GM10248 (cell line): ENCODE measurements at regions of chr16 and their contacts with region 1.

Region 1: DNA sequence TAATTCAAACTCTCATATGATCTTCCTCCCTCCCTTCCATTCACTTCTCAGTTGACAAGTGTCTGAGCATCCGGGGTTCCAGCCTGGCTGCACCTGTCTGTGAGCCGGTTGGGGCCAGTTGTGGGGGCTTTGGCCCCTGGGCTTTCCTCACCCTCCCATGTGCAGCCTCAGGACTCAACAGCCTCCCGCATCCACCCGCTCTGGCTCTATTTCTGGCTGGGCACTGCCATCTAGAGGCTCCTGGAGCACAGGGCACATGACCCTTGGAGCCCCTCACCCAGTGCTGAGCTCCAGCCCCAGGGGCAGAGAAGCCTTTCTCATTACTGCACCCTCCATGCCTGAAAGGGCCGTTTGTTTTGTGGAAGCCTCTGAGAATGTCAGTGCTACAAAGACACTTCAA is 43.3 kb downstream of the HAPSTR1 start:
- DNase-seq: peak; percentile 78
- CTCF ChIP-seq: peak; percentile 83

Region 2: DNA sequence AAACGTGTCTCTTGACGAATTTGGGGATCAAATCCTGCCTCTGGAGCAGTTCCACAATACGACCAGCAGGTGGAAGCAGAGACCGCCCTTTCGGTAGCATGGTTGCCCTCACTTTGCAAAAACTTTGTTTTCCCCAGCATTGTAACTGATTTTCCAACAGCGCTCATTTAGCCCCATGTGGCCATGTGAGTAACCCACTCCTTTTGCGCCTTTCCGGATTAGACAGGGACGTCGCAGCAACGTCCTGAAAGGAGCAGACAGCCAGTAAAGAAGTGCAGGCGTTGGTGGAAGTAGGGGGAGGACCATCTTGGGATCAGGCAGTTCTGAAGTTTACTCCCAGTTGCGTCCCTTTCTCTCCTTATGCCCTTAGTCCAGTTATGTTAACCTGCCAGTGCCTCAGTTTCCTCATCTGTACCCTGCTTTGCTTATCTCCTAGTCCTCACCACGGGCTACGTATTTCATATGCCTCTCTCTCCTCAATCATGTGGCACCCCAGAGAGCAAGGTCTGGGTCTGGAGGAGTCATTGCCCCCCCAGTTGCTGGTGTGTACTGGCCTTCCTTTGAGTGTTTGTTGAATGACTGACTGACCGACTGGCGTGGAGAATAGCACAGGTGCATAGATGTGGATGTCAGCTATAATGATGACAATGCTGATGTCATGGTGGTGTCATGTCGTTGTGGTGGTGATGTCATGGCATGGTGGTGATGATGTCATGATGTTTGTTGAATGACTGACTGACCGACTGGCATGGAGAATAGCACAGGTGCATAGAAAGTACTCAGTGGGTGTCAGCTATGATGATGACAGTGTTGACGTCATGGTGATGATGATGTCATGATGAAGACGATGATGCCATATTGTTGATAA is 566.8 kb before region 1 on chr16:
- CTCF ChIA-PET with region 1: interaction called, 10 read pairs
- POLR2A ChIA-PET with region 1: no interaction called
- DNase-seq: peak; percentile 79
- CTCF ChIP-seq: peak; percentile 86

Region 3: DNA sequence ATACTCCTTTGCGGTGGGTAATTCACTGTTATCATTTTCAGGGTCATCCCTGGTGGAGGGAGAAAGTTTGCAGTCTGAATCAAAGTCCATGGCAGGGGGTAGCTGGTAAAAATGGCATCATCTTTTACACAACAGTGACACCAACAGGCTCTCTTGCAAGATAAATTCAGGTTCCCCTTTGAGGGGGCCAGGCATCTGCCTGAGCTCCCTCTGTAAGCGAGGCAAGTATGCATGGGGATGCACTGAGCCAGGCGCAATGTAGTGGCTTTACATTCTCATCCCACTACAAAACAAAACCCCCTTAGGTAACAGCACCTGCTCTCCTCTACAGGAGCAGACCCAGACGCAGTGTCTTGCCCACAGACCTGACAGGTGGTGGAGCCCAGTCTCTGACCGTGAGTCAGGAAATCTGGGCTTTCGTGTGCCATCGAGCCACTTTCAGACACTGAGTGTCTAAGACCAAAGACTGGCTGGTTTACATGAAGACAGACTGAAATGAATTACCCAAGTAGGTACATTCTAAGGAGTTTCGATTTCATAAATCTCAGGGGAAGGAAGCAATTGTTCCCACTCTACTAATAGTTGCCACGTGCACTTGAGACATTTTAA is 234.9 kb before region 1 on chr16:
- CTCF ChIA-PET with region 1: interaction called, 11 read pairs
- POLR2A ChIA-PET with region 1: no interaction called
- DNase-seq: no peak
- CTCF ChIP-seq: no peak

Region 4: GRCh38 chr16:9151597-9151996 is 16.9 kb after region 1 on chr16:
- CTCF ChIA-PET with region 1: interaction called, 51 read pairs
- POLR2A ChIA-PET with region 1: no interaction called
- DNase-seq: no peak
- CTCF ChIP-seq: no peak

Region 5: GRCh38 chr16:9165681-9166080 is 30.9 kb after region 1 on chr16:
- CTCF ChIA-PET with region 1: no interaction called
- POLR2A ChIA-PET with region 1: no interaction called
- DNase-seq: no peak
- CTCF ChIP-seq: no peak

Region 6: GRCh38 chr16:10181196-10182162 is 1046.7 kb after region 1 on chr16:
- CTCF ChIA-PET with region 1: interaction called, 21 read pairs
- POLR2A ChIA-PET with region 1: no interaction called
- DNase-seq: peak; percentile 85
- CTCF ChIP-seq: peak; percentile 82